ENCODE measurements at regions of chr13 and their contacts with region 1.

Region 1: DNA sequence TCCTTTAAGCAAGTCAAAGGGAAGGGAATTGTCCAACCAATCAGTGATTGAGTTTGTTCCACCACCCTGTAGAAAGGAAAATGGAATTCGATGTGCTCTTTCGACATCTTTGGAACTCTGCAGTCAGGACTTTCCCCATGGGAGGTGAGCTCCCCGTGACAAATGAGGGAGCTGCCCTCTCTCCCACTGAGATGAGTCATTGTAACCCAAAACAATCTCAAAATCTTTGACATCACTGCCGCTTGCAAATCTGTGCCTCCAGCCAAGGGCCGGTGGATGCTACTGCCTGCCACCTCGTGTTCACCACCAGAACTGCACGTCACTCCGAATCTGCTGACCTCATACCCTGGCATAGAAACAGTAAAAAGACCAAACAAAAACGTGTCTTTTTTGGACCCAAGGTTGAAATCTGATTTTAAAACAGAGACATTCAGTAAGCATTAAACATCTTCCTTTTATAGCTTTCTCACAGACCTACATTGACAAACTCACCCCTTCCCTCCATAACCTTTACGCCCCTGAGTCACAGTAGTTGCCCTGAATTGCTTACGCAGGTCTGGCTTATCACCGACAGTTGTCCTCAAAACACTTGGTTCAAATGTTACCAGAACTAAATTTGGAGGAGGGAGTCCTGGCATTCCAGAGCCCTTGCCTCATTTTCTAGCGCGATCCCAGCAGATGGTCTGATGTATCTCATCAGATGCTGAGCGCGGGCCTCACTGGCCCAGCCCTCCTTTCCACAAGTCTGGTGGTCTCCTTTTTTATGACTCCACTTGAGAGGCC is 105.2 kb downstream of the COL4A2 start:
- DNase-seq: peak; percentile 87 to 90
- H3K4me3 ChIP-seq: no peak overlapping the region
- H3K27ac ChIP-seq: peak overlapping the region; percentile 40 to 94 (median 78)
- H3K4me1 ChIP-seq: peaks cover 22 to 77% of the 10 kb centered on the region in 2 donors
- H3K27me3 ChIP-seq: no peaks in the 10 kb centered on the region
- CTCF ChIP-seq: peak; percentile 67 to 98 (median 90)
- POLR2A ChIP-seq: peak in 1 of 2 donors; percentile 36

Region 2: GRCh38 chr13:110220471-110220870 is 191.9 kb before region 1 on chr13:
- intact Hi-C with region 1: loop called (anchors 5 kb)
- DNase-seq: no peak
- H3K4me3 ChIP-seq: no peak overlapping the region
- H3K27ac ChIP-seq: peak overlapping the region in 2 of 3 donors; percentile 49 to 80
- H3K4me1 ChIP-seq: peaks cover 4 to 27% of the 10 kb centered on the region in 2 donors
- H3K27me3 ChIP-seq: no peaks in the 10 kb centered on the region
- CTCF ChIP-seq: no peak
- POLR2A ChIP-seq: no peak

Region 3: GRCh38 chr13:110319774-110320509 is 92.4 kb before region 1 on chr13:
- intact Hi-C with region 1: loop called (anchors 10 kb)
- DNase-seq: peak; percentile 76 to 81
- H3K4me3 ChIP-seq: no peak overlapping the region
- H3K27ac ChIP-seq: peak overlapping the region; percentile 46 to 86 (median 69)
- H3K4me1 ChIP-seq: peaks cover 86 to 99% of the 10 kb centered on the region in 2 donors
- H3K27me3 ChIP-seq: no peaks in the 10 kb centered on the region
- CTCF ChIP-seq: no peak
- POLR2A ChIP-seq: no peak

Region 4: DNA sequence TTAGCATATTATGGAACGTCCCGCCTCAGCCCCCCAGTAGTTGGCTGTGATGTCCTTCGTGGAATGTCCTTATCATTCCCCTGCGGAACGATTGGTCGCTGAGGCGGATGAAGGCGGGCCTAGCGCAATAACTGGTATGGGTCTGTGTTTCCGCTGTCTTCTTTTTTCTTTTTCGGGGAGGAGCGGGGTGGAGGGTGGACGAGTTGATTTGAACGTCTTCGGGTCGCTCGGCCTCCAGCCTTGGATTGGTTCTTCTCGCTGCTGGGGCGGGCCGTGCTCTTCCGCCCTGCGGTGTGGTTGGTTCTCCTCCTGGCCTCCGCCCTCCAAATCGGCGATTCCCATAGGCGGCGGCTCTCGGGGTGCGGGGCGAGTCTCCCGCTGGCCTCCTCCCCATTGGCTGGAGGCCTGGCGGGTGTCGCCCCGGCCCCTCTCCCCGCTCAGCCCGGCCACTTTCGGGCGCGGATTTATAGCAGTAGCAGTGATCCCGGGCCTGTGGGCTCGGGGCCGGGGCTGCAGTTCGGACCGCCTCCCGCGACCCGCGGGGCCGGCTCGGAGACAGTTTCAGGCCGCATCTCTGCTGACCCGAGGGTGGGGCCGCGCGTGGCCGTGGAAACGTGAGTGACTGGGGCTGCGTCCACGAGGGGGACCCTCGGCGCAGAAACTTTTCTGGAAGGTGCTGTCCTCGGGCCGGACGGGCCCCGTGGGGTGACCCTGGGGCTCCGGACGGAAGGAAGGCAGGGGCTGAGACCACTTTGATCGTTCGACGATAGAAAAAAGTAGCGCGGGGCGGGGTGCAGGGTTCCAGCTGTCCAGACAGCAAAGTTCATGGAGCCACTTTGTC is 303.3 kb after region 1 on chr13:
- intact Hi-C with region 1: no loop called
- DNase-seq: peak; percentile 99
- H3K4me3 ChIP-seq: peak overlapping the region; percentile 59 to 83 (median 79)
- H3K27ac ChIP-seq: peak overlapping the region; percentile 97 to 100 (median 99)
- H3K4me1 ChIP-seq: peaks cover 17 to 18% of the 10 kb centered on the region in 2 donors
- H3K27me3 ChIP-seq: no peaks in the 10 kb centered on the region
- CTCF ChIP-seq: peak in 2 of 6 experiments; percentile 2 to 26
- POLR2A ChIP-seq: peak; percentile 25 to 53